A549 (cell line): ENCODE measurements at regions of chr17 and their contacts with region 1.

Region 1: DNA sequence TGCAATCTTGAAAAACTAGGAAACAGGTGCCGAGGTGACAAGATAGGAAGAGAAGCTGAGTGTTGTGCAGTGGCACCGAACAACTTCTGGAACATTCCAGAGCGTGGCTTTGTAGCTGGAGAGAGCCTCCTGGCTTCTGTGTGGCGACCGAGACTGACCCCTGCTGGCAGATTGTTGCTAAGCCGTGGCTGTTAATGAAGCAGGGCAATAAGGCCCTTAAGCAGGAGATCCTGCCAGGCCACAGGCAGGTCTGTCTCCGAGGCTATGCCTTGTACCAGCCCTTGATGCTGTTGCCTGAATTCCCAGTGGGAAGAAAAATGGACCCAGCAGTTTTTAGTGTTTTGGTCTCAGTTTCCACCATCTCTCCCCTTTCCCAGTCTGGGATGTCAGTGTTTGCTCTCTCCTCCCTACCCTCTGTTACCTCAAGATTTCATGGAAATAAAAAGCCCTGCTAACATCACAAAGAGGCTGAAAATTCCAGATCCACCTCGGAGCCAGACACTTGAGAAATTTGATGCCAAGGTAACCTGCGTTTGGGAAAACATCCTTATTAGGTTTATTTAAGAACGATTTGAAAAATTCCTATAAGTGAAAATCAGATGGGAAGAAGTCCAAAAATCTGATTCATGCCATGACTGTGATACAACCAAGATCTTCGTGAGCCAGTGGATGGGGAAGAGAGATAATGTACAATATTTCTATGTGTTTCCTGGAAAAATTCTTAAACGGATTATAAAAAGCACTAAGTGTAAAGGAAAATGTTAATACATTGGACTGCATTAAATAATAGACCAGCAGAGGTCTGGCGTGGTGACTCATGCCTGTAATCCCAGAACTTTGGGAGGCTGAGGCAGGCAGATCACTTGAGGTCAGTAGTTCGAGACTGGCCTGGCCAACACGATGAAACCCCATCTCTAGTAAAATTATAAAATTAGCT is 265.1 kb downstream of the PRKCA start:
- DNase-seq: peak; percentile 78 to 87
- ATAC-seq: peak; percentile 90 to 94
- H3K4me3 ChIP-seq: no peak overlapping the region
- H3K27ac ChIP-seq: peak overlapping the region; percentile 75 to 89
- H3K4me1 ChIP-seq: peaks cover 53% of the 10 kb centered on the region
- CTCF ChIP-seq: peak; percentile 97
- EP300 ChIP-seq: 0 out of 5 replicates have a peak, but pooled peaks have one; percentile 14 to 33
- POLR2A ChIP-seq: no peak
- RAD21 ChIP-seq: peak; percentile 96 to 98

Region 2: GRCh38 chr17:66301797-66302741 is 265.4 kb before region 1 on chr17 and contains the start of gene PRKCA:
- CTCF ChIA-PET with region 1: interaction called, 11 read pairs
- POLR2A ChIA-PET with region 1: no interaction called
- DNase-seq: peak; percentile 73 to 83
- ATAC-seq: peak; percentile 58 to 84
- H3K4me3 ChIP-seq: peak within 1 kb of the TSS; percentile 85
- H3K27ac ChIP-seq: peak within 1 kb of the TSS; percentile 88 to 97
- H3K4me1 ChIP-seq: peaks cover 21% of the 10 kb centered on the region
- CTCF ChIP-seq: no peak
- EP300 ChIP-seq: no peak
- POLR2A ChIP-seq: peak; percentile 99
- RAD21 ChIP-seq: no peak; a peak in 1 of 5 replicates
- polyA plus RNA-seq, gene PRKCA: 65.0 and 79.7 TPM in 2 replicates

Region 3: DNA sequence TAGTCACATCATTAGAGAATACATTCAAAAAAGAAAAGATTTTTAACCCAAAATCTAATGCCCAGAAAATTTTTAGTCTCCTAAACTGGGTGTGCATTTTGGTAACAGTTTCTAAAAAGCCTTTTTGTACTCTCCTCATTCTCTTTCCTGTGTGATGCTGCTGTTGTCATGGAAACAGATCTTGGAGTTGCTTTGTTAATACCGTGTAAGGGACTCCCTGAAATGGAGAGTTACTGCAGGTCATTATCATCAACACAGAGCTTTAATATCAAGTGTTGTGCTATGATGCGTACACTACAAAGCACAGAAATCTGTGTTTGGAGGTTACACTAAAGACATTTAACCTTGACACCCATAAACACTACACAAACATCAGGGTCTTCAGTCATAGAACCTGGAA is 48.8 kb before region 1 on chr17:
- CTCF ChIA-PET with region 1: interaction called, 15 read pairs
- POLR2A ChIA-PET with region 1: no interaction called
- DNase-seq: no peak
- ATAC-seq: no peak
- H3K4me3 ChIP-seq: no peak overlapping the region
- H3K27ac ChIP-seq: no peak overlapping the region
- H3K4me1 ChIP-seq: peaks cover 44% of the 10 kb centered on the region
- CTCF ChIP-seq: no peak
- EP300 ChIP-seq: no peak
- POLR2A ChIP-seq: no peak
- RAD21 ChIP-seq: no peak

Region 4: DNA sequence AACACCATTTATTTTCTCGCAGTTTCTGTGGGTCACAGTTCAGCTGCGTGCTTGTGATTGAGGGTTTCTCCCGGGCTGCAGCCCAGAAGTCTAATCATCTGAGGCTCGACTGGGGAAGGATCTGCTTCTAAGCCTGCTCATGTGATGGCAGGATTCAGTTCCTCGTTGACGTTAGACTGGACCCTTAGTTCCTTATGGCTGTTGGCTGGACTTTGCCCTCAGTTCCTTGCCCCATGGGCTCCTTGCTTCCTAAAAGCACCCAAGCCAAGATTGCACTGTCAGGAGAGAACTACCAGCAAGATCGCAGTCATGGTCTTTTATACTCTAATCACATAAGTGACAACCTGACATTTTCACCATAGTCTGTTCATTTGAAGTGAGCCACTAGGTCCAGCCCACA is 15.1 kb before region 1 on chr17:
- CTCF ChIA-PET with region 1: interaction called, 15 read pairs
- POLR2A ChIA-PET with region 1: no interaction called
- DNase-seq: no peak
- ATAC-seq: no peak
- H3K4me3 ChIP-seq: no peak overlapping the region
- H3K27ac ChIP-seq: peak overlapping the region in 1 of 2 experiments; percentile 51; a peak in 3 of 6 replicates
- H3K4me1 ChIP-seq: peaks cover 53% of the 10 kb centered on the region
- CTCF ChIP-seq: no peak
- EP300 ChIP-seq: no peak
- POLR2A ChIP-seq: no peak
- RAD21 ChIP-seq: no peak